ENCODE measurements at regions of chr15 and their contacts with region 1.

Region 1: DNA sequence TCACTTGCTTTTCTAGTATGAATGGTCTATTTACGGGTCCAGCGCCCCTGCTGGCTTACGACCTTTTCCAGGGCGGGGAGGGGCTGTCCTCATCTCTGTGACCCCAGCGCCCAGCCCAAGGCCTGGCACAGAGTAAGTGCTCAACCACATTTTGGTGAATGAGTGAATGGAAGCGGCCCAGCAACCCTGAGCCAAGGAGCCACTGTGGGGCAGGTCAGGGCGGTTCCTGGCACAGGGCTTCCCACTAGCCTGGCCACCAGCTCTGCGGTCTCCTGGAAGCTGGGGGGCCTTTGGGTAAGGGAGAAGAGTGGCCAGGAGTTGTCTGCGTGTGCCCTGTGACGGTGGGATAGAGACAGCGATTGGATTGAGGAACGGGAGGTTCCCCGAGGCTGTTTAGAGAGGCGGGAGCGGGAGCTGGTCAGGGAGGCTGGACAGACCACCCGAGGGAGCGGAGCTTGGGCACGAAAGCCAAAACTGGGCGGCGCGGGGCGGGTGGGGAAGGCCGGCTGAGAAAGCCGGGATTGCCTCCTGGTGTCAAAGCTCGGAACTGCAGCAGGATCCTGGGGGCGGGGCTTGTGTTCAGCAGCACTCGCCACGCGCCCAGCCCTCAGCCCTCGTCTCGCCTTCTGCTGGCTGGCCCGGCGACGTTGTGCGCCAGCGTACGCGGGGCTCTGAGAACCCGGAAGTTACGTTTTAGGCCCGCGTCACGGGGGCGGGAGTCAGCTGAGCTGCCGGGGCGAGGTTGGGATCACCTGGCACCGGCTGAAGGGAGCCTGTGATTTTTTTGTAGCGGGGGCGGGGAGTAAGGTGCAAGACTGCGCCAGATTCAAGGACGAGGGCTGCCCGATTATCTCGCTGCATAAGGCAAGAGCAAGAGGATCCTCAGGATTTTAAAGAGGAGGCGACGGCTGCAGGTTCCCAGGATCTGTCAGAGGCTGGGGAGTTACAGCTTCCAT is at the start of gene VPS18:
- DNase-seq: peak; percentile 99
- ATAC-seq: peak; percentile 99
- H3K4me3 ChIP-seq: peak within 1 kb of the TSS; percentile 81 to 98 (median 92)
- H3K4me3 Mint-ChIP-seq: peak within 1 kb of the TSS; percentile 99
- H3K27ac ChIP-seq: peak within 1 kb of the TSS; percentile 84 to 91
- H3K27ac Mint-ChIP-seq: peak within 1 kb of the TSS; percentile 94
- H3K4me1 ChIP-seq: peaks cover 18 to 19% of the 10 kb centered on the region in 2 donors
- H3K4me1 Mint-ChIP-seq: peaks cover 28% of the 10 kb centered on the region
- H3K27me3 ChIP-seq: no peaks in the 10 kb centered on the region
- H3K27me3 Mint-ChIP-seq: no peaks in the 10 kb centered on the region
- CTCF ChIP-seq: peak; percentile 88
- total RNA-seq, gene VPS18: 29.6 TPM in 2 replicates

Region 2: GRCh38 chr15:40684381-40684780 is 209.6 kb before region 1 on chr15:
- CTCF ChIA-PET with region 1: interaction called, 3 read pairs
- POLR2A ChIA-PET with region 1: no interaction called
- intact Hi-C with region 1: loop called (anchors 1 kb)
- DNase-seq: no peak
- ATAC-seq: no peak
- H3K4me3 ChIP-seq: no peak overlapping the region
- H3K4me3 Mint-ChIP-seq: no peak overlapping the region
- H3K27ac ChIP-seq: no peak overlapping the region
- H3K27ac Mint-ChIP-seq: peak overlapping the region; percentile 41
- H3K4me1 ChIP-seq: peaks cover 11 to 15% of the 10 kb centered on the region in 2 donors
- H3K4me1 Mint-ChIP-seq: peaks cover 12% of the 10 kb centered on the region
- H3K27me3 ChIP-seq: no peaks in the 10 kb centered on the region
- H3K27me3 Mint-ChIP-seq: no peaks in the 10 kb centered on the region
- CTCF ChIP-seq: no peak

Region 3: DNA sequence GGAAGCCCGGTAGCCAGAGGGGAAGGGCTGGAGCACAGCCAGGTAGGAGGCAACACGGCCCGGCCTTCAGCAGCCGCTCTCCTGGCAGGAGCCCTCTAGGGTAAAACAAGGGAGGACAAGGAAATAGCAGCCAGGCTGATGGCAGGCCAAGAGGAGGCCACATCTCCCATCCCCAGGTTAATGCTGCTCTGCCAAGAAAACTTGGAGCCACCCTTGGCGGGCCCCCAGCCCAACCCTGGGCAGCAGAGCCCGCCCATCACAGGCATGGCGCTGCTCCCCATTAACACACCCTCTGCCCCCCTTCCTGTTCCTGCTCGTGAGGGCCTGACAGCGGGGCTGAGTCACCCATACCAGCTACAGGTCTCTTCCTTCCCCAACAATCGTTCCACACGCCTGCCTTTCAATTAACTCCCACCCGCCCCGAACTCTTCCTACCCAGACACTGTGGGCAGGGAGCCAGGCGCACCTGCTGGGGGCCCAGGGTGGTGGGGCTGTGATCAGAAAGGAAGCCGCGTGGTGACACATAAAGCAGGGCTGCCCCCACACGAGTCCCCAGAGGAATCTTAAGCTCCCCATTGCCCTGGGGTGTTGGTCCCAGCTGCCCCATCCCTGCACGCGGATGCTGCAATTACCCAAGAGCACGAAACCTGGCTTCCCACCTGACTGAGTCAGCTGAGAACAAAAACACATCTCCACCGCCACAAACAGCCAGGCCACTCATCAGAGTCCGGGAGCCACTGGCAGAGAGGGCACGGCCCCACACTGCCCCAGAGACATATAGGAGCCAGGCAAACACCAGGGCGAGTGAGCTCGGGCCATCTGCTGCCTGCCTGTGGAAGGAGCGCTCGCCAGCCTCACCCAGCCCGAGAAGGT is 124.5 kb before region 1 on chr15 and contains the start of gene C15orf62:
- CTCF ChIA-PET with region 1: interaction called, 3 read pairs
- POLR2A ChIA-PET with region 1: no interaction called
- intact Hi-C with region 1: loop called (anchors 1 kb)
- DNase-seq: peak; percentile 85
- ATAC-seq: peak; percentile 82
- H3K4me3 ChIP-seq: peak within 1 kb of the TSS in 4 of 5 experiments; percentile 15 to 52 (median 38)
- H3K4me3 Mint-ChIP-seq: peak within 1 kb of the TSS; percentile 88
- H3K27ac ChIP-seq: peak within 1 kb of the TSS; percentile 42 to 78
- H3K27ac Mint-ChIP-seq: peak within 1 kb of the TSS; percentile 95
- H3K4me1 ChIP-seq: peaks cover 45 to 56% of the 10 kb centered on the region in 2 donors
- H3K4me1 Mint-ChIP-seq: peaks cover 51% of the 10 kb centered on the region
- H3K27me3 ChIP-seq: no peaks in the 10 kb centered on the region
- H3K27me3 Mint-ChIP-seq: no peaks in the 10 kb centered on the region
- CTCF ChIP-seq: no peak
- total RNA-seq, gene C15orf62: 8.6 and 9.5 TPM in 2 replicates

Region 4: GRCh38 chr15:40857601-40858341 is 36.2 kb before region 1 on chr15:
- CTCF ChIA-PET with region 1: interaction called, 189 read pairs
- POLR2A ChIA-PET with region 1: interaction called, 9 read pairs
- intact Hi-C with region 1: loop called (anchors 1 kb)
- DNase-seq: peak; percentile 82
- ATAC-seq: peak; percentile 95
- H3K4me3 ChIP-seq: no peak overlapping the region
- H3K4me3 Mint-ChIP-seq: no peak overlapping the region
- H3K27ac ChIP-seq: no peak overlapping the region
- H3K27ac Mint-ChIP-seq: no peak overlapping the region
- H3K4me1 ChIP-seq: peaks cover 0 to 10% of the 10 kb centered on the region in 2 donors
- H3K4me1 Mint-ChIP-seq: peaks cover 12% of the 10 kb centered on the region
- H3K27me3 ChIP-seq: no peaks in the 10 kb centered on the region
- H3K27me3 Mint-ChIP-seq: no peaks in the 10 kb centered on the region
- CTCF ChIP-seq: peak; percentile 93

Region 5: DNA sequence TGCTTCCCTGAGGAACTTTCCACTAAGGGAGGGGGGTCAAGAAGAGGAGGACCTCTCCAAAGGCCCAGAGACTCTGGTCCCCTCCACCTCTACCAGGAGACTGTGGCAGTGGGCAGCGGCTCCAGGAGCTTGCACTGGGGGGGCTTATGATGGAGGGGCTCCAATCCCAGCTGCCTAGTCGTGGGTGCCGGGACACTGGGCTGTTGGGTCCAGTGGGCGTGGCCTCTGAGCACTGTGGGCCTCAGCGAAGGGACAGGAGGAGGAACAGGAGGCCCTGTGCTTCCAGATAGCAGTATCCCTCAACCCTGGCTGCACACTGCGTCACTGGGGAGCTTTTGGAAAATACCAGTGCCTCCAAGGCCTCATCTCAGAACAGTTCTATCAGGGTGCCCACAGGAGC is 21.7 kb after region 1 on chr15:
- CTCF ChIA-PET with region 1: no interaction called
- POLR2A ChIA-PET with region 1: no interaction called
- intact Hi-C with region 1: no loop called
- DNase-seq: no peak
- ATAC-seq: no peak
- H3K4me3 ChIP-seq: no peak overlapping the region
- H3K4me3 Mint-ChIP-seq: no peak overlapping the region
- H3K27ac ChIP-seq: no peak overlapping the region
- H3K27ac Mint-ChIP-seq: no peak overlapping the region
- H3K4me1 ChIP-seq: no peaks in the 10 kb centered on the region
- H3K4me1 Mint-ChIP-seq: no peaks in the 10 kb centered on the region
- H3K27me3 ChIP-seq: no peaks in the 10 kb centered on the region
- H3K27me3 Mint-ChIP-seq: no peaks in the 10 kb centered on the region
- CTCF ChIP-seq: no peak

Region 6: GRCh38 chr15:40952901-40953712 is 59.1 kb after region 1 on chr15 and contains the start of gene CHAC1:
- CTCF ChIA-PET with region 1: interaction called, 6 read pairs
- POLR2A ChIA-PET with region 1: no interaction called
- intact Hi-C with region 1: loop called (anchors 1 kb)
- DNase-seq: peak; percentile 95
- ATAC-seq: peak; percentile 97
- H3K4me3 ChIP-seq: peak within 1 kb of the TSS; percentile 40 to 74 (median 64)
- H3K4me3 Mint-ChIP-seq: peak within 1 kb of the TSS; percentile 93
- H3K27ac ChIP-seq: peak within 1 kb of the TSS in 1 of 2 donors; percentile 25
- H3K27ac Mint-ChIP-seq: peak within 1 kb of the TSS; percentile 84
- H3K4me1 ChIP-seq: peaks cover 9 to 14% of the 10 kb centered on the region in 2 donors
- H3K4me1 Mint-ChIP-seq: peaks cover 18% of the 10 kb centered on the region
- H3K27me3 ChIP-seq: peaks cover 0 to 14% (median 2%) of the 10 kb centered on the region in 4 experiments
- H3K27me3 Mint-ChIP-seq: peaks cover 9% of the 10 kb centered on the region
- CTCF ChIP-seq: no peak
- total RNA-seq, gene CHAC1: 3.1 and 3.6 TPM in 2 replicates

Region 7: GRCh38 chr15:41283653-41284426 is 389.8 kb after region 1 on chr15:
- CTCF ChIA-PET with region 1: no interaction called
- POLR2A ChIA-PET with region 1: no interaction called
- intact Hi-C with region 1: loop called (anchors 1 kb)
- DNase-seq: peak; percentile 99
- ATAC-seq: peak; percentile 98
- H3K4me3 ChIP-seq: peak overlapping the region; percentile 86 to 97 (median 94)
- H3K4me3 Mint-ChIP-seq: peak overlapping the region; percentile 95
- H3K27ac ChIP-seq: peak overlapping the region; percentile 86 to 90
- H3K27ac Mint-ChIP-seq: peak overlapping the region; percentile 97
- H3K4me1 ChIP-seq: peaks cover 16 to 33% of the 10 kb centered on the region in 2 donors
- H3K4me1 Mint-ChIP-seq: peaks cover 42% of the 10 kb centered on the region
- H3K27me3 ChIP-seq: no peaks in the 10 kb centered on the region
- H3K27me3 Mint-ChIP-seq: no peaks in the 10 kb centered on the region
- CTCF ChIP-seq: no peak

Measured in B cell (primary cell).